ENCODE measurements at regions of chr1 and their contacts with region 1.

Region 1: GRCh38 chr1:42035830-42036604 is 117.2 kb upstream of the GUCA2B start:
- DNase-seq: peak; percentile 95 to 98 (median 96)
- H3K4me3 ChIP-seq: peak overlapping the region; percentile 67 to 71
- H3K4me3 Mint-ChIP-seq: peak overlapping the region; percentile 80 to 85 (median 84)
- H3K27ac ChIP-seq: peak overlapping the region; percentile 40
- H3K27ac Mint-ChIP-seq: peak overlapping the region in 5 of 7 donors; percentile 31 to 85 (median 72)
- H3K4me1 ChIP-seq: peaks cover 39% of the 10 kb centered on the region
- H3K4me1 Mint-ChIP-seq: peaks cover 28 to 47% (median 35%) of the 10 kb centered on the region in 4 donors
- H3K27me3 ChIP-seq: no peaks in the 10 kb centered on the region
- H3K27me3 Mint-ChIP-seq: no peaks in the 10 kb centered on the region

Region 2: DNA sequence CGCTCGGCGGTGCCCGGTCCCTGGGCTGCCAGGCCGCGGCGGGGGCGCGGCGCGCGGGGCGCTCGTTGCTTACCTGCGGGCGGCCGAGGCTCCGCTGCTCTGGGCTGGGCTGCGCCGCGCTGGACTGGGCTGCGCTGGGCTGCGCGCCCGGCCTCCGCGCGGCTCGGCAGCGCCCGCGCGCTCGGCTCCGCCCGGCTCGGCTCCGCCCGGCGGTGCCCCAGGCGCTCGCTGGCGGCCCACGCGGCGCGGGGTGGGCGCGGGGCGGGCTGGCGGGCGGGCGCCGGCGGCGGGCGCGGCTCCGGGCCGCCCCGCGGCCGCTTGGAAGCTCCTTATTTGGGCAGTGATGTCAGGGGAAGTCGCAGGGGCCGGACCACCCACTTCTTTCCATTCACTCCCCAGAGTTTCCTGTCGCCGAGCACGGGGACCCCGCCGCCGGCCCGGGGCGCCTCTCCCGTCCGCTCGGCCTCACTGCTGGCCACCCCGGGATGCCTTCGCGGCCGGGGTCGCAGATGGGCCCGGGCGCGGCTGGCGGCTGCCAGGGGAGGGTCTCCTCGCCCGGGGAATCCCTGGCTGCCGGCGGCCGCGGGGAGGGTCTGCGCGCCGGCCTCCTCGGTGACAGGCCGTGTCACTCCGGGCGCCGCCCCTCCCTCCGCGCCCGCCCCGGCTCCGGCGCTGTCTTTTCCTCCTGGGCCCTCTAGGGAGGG is 373.8 kb before region 1 on chr1:
- CTCF ChIA-PET with region 1: no interaction called
- POLR2A ChIA-PET with region 1: no interaction called
- intact Hi-C with region 1: loop called (anchors 10 kb)
- DNase-seq: peak; percentile 68 to 81 (median 76)
- H3K4me3 ChIP-seq: peak overlapping the region in 1 of 2 donors; percentile 64
- H3K4me3 Mint-ChIP-seq: peak overlapping the region in 3 of 8 donors; percentile 68 to 93 (median 79)
- H3K27ac ChIP-seq: peak overlapping the region; percentile 67
- H3K27ac Mint-ChIP-seq: peak overlapping the region in 6 of 7 donors; percentile 48 to 84 (median 55)
- H3K4me1 ChIP-seq: peaks cover 82% of the 10 kb centered on the region
- H3K4me1 Mint-ChIP-seq: peaks cover 58 to 89% (median 75%) of the 10 kb centered on the region in 4 donors
- H3K27me3 ChIP-seq: no peaks in the 10 kb centered on the region
- H3K27me3 Mint-ChIP-seq: no peaks in the 10 kb centered on the region

Region 3: GRCh38 chr1:41802532-41803501 is 233.2 kb before region 1 on chr1:
- CTCF ChIA-PET with region 1: no interaction called
- POLR2A ChIA-PET with region 1: interaction called, 3 read pairs
- intact Hi-C with region 1: loop called (anchors 5 kb)
- DNase-seq: peak; percentile 51 to 64 (median 59)
- H3K4me3 ChIP-seq: peak overlapping the region in 1 of 2 donors; percentile 35
- H3K4me3 Mint-ChIP-seq: peak overlapping the region; percentile 12 to 79 (median 72)
- H3K27ac ChIP-seq: peak overlapping the region; percentile 55
- H3K27ac Mint-ChIP-seq: peak overlapping the region; percentile 75 to 97 (median 93)
- H3K4me1 ChIP-seq: peaks cover 87% of the 10 kb centered on the region
- H3K4me1 Mint-ChIP-seq: peaks cover 72 to 93% (median 82%) of the 10 kb centered on the region in 4 donors
- H3K27me3 ChIP-seq: no peaks in the 10 kb centered on the region
- H3K27me3 Mint-ChIP-seq: no peaks in the 10 kb centered on the region

Measured in CD4-positive, alpha-beta memory T cell (primary cell).